AG04450 (cell line): ENCODE measurements at regions of chr3 and their contacts with region 1.

Region 1: GRCh38 chr3:157532529-157533297 is 29.5 kb upstream of the VEPH1 start:
- DNase-seq: peak; percentile 71
- H3K4me3 ChIP-seq: peak overlapping the region; percentile 52
- H3K27ac ChIP-seq: peak overlapping the region; percentile 86
- H3K27me3 ChIP-seq: no peaks in the 10 kb centered on the region
- CTCF ChIP-seq: peak; percentile 85

Region 2: DNA sequence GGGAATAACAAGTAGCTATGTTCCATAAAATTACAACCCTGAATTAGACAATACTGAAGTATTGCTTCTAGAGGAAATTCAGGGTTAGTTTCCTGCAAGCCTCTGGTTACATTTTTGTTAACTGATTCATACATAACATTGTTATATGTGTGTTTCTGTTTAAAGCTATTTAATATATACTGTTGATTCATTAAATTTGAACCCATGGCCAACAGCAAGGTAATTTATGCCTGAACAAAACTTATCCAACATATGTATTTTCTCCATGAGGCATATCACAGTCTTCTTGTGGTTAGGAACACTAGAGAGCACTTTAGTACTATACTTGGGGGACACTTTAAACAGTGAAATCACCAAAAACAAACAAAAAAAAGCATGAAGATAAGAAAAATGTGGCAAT is 143.7 kb before region 1 on chr3:
- CTCF ChIA-PET with region 1: no interaction called
- POLR2A ChIA-PET with region 1: no interaction called
- DNase-seq: peak; percentile 21
- H3K4me3 ChIP-seq: no peak overlapping the region
- H3K27ac ChIP-seq: no peak overlapping the region
- H3K27me3 ChIP-seq: no peaks in the 10 kb centered on the region
- CTCF ChIP-seq: no peak

Region 3: DNA sequence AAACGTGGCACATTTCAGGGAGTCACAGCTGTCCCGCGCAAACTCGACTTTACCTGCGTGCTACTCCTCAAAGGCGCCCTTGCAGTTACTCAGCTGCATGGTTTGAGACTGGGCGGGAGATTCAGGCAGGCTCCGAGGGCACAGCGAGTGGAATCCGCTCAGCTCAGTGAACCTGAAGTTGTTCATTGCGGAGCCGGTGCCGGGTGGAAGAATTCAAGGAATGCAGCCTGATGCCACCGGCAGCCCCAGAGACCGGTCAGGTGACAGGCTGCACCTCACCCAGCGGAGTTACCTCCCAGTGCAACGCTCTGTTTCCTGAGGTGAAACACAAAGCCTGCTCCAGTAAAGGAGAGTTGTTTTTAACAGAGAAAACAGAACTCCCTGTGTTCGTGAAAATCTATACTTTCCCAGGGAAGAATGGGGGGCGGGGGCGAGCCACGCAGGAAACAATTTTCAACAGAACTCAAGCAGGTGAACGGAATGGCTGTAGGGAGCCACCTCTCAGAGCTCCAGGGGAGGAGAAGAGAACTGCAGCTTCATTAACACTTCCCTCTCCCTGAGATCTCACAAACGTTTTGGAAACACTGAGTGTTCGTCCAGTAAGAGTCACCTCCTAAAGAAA is 33.3 kb before region 1 on chr3:
- CTCF ChIA-PET with region 1: interaction called, 15 read pairs
- POLR2A ChIA-PET with region 1: no interaction called
- DNase-seq: no peak
- H3K4me3 ChIP-seq: peak overlapping the region; percentile 52
- H3K27ac ChIP-seq: no peak overlapping the region
- H3K27me3 ChIP-seq: no peaks in the 10 kb centered on the region
- CTCF ChIP-seq: 0 out of 2 replicates have a peak, but pooled peaks have one; percentile 11

Region 4: GRCh38 chr3:157572559-157573270 is 40.0 kb after region 1 on chr3:
- CTCF ChIA-PET with region 1: interaction called, 241 read pairs
- POLR2A ChIA-PET with region 1: interaction called, 5 read pairs
- DNase-seq: no peak
- H3K4me3 ChIP-seq: no peak overlapping the region
- H3K27ac ChIP-seq: no peak overlapping the region
- H3K27me3 ChIP-seq: no peaks in the 10 kb centered on the region
- CTCF ChIP-seq: peak; percentile 82

Region 5: GRCh38 chr3:157606011-157606851 is 73.5 kb after region 1 on chr3:
- CTCF ChIA-PET with region 1: interaction called, 49 read pairs
- POLR2A ChIA-PET with region 1: interaction called, 6 read pairs
- DNase-seq: peak; percentile 39
- H3K4me3 ChIP-seq: no peak overlapping the region
- H3K27ac ChIP-seq: no peak overlapping the region
- H3K27me3 ChIP-seq: peaks cover 4% of the 10 kb centered on the region
- CTCF ChIP-seq: peak; percentile 91

Region 6: GRCh38 chr3:157832588-157832987 is 299.9 kb after region 1 on chr3:
- CTCF ChIA-PET with region 1: no interaction called
- POLR2A ChIA-PET with region 1: no interaction called
- DNase-seq: no peak
- H3K4me3 ChIP-seq: no peak overlapping the region
- H3K27ac ChIP-seq: no peak overlapping the region
- H3K27me3 ChIP-seq: no peaks in the 10 kb centered on the region
- CTCF ChIP-seq: no peak

Region 7: GRCh38 chr3:158308236-158308928 is 775.7 kb after region 1 on chr3:
- CTCF ChIA-PET with region 1: no interaction called
- POLR2A ChIA-PET with region 1: no interaction called
- DNase-seq: no peak
- H3K4me3 ChIP-seq: no peak overlapping the region
- H3K27ac ChIP-seq: no peak overlapping the region
- H3K27me3 ChIP-seq: no peaks in the 10 kb centered on the region
- CTCF ChIP-seq: no peak

Region 8: GRCh38 chr3:158434412-158435038 is 901.8 kb after region 1 on chr3:
- CTCF ChIA-PET with region 1: interaction called, 22 read pairs
- POLR2A ChIA-PET with region 1: no interaction called
- DNase-seq: peak; percentile 21
- H3K4me3 ChIP-seq: no peak overlapping the region
- H3K27ac ChIP-seq: no peak overlapping the region
- H3K27me3 ChIP-seq: no peaks in the 10 kb centered on the region
- CTCF ChIP-seq: peak; percentile 83